Right ventricle myocardium inferior (tissue), 1 donor: ENCODE measurements at regions of chr4 and their contacts with region 1.

Region 1: GRCh38 chr4:10116580-10117358 is at the start of gene WDR1:
- DNase-seq: peak; percentile 99
- ATAC-seq: peak; percentile 99
- total RNA-seq, gene WDR1: 210 TPM

Region 2: GRCh38 chr4:10083861-10084641 is 32.7 kb before region 1 on chr4:
- intact Hi-C with region 1: loop called (anchors 2 kb)
- DNase-seq: peak; percentile 67
- ATAC-seq: peak; percentile 28